ENCODE measurements at regions of chr15 and their contacts with region 1.

Region 1: GRCh38 chr15:60592371-60593169 is 113.6 kb upstream of the ICE2 start:
- DNase-seq: peak; percentile 91
- ATAC-seq: peak; percentile 85
- H3K4me3 Mint-ChIP-seq: peak overlapping the region; percentile 76
- H3K27ac Mint-ChIP-seq: peak overlapping the region; percentile 51
- H3K4me1 Mint-ChIP-seq: peaks cover 47% of the 10 kb centered on the region
- H3K27me3 Mint-ChIP-seq: no peaks in the 10 kb centered on the region

Region 2: GRCh38 chr15:60932051-60932915 is 339.7 kb after region 1 on chr15:
- CTCF ChIA-PET with region 1: interaction called, 10 read pairs
- POLR2A ChIA-PET with region 1: no interaction called
- intact Hi-C with region 1: loop called in 1 of 2 experiments (anchors 5 kb)
- DNase-seq: peak; percentile 79
- ATAC-seq: peak; percentile 95
- H3K4me3 Mint-ChIP-seq: no peak overlapping the region
- H3K27ac Mint-ChIP-seq: no peak overlapping the region
- H3K4me1 Mint-ChIP-seq: peaks cover 11% of the 10 kb centered on the region
- H3K27me3 Mint-ChIP-seq: peaks cover 6% of the 10 kb centered on the region

Measured in activated CD4-positive, alpha-beta T cell treated with anti-CD3 and anti-CD28 coated beads for 36 hours (primary cell).